CD14-positive monocyte (primary cell): ENCODE measurements at regions of chr9 and their contacts with region 1.

Region 1: GRCh38 chr9:98263482-98264357 is 8.3 kb upstream of the TBC1D2 start:
- DNase-seq: peak; percentile 68 to 85 (median 77)
- H3K4me3 ChIP-seq: no peak overlapping the region
- H3K4me3 Mint-ChIP-seq: no peak overlapping the region
- H3K27ac ChIP-seq: no peak overlapping the region
- H3K27ac Mint-ChIP-seq: no peak overlapping the region
- H3K4me1 ChIP-seq: no peaks in the 10 kb centered on the region
- H3K4me1 Mint-ChIP-seq: peaks cover 2% of the 10 kb centered on the region
- H3K27me3 ChIP-seq: no peaks in the 10 kb centered on the region
- H3K27me3 Mint-ChIP-seq: peaks cover 0 to 4% (median 2%) of the 10 kb centered on the region in 3 donors
- CTCF ChIP-seq: peak; percentile 92

Region 2: GRCh38 chr9:98074115-98074990 is 189.4 kb before region 1 on chr9:
- intact Hi-C with region 1: loop called (anchors 5 kb)
- DNase-seq: peak; percentile 38 to 60 (median 58)
- H3K4me3 ChIP-seq: no peak overlapping the region
- H3K4me3 Mint-ChIP-seq: no peak overlapping the region
- H3K27ac ChIP-seq: peak overlapping the region in 1 of 2 donors; percentile 23
- H3K27ac Mint-ChIP-seq: peak overlapping the region; percentile 56 to 79 (median 75)
- H3K4me1 ChIP-seq: peaks cover 23 to 25% of the 10 kb centered on the region in 2 donors
- H3K4me1 Mint-ChIP-seq: peaks cover 34% of the 10 kb centered on the region
- H3K27me3 ChIP-seq: no peaks in the 10 kb centered on the region
- H3K27me3 Mint-ChIP-seq: peaks cover 0 to 3% (median 0%) of the 10 kb centered on the region in 3 donors
- CTCF ChIP-seq: peak; percentile 99

Region 3: GRCh38 chr9:98207606-98208005 is 56.1 kb before region 1 on chr9:
- intact Hi-C with region 1: loop called (anchors 1 to 2 kb)
- DNase-seq: no peak
- H3K4me3 ChIP-seq: no peak overlapping the region
- H3K4me3 Mint-ChIP-seq: no peak overlapping the region
- H3K27ac ChIP-seq: peak overlapping the region in 1 of 2 donors; percentile 15
- H3K27ac Mint-ChIP-seq: peak overlapping the region in 5 of 7 donors; percentile 64 to 78 (median 68)
- H3K4me1 ChIP-seq: no peaks in the 10 kb centered on the region
- H3K4me1 Mint-ChIP-seq: peaks cover 6% of the 10 kb centered on the region
- H3K27me3 ChIP-seq: no peaks in the 10 kb centered on the region
- H3K27me3 Mint-ChIP-seq: peaks cover 0 to 2% (median 0%) of the 10 kb centered on the region in 3 donors
- CTCF ChIP-seq: no peak